ENCODE measurements at regions of chr5 and their contacts with region 1.

Region 1: DNA sequence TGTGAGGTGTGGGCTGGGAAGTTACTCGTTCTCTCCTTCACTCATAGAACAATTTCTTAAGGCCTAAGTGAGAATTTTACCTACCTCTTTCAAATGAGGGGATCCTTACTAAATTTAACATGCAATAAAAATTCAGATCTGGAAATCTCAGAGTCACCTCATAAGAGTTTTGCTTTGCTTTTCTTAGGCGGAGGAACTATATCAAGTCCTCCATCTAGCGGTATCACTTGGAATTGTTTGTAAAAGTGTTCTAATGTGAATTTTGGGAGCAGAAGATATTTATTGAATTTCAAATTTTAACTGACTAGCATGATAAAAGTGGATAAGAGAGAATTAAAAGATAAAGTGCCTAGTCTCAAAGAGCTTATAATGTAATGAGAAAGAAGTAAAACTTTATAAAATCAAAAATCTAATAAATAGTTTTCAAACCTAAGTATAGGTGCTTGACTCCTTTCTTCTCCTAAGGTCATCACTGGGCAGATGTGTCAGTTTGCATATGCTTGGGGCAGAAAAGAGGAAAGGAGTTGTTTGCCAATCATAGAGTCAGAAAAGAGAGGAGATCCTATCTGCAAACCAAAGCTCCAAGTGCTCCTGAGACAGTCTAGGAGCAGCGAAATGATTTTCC is 145.7 kb upstream of the DAB2 start:
- DNase-seq: peak; percentile 30 to 65 (median 59)
- H3K4me3 ChIP-seq: no peak overlapping the region
- H3K27ac ChIP-seq: no peak overlapping the region
- H3K4me1 ChIP-seq: no peaks in the 10 kb centered on the region
- H3K27me3 ChIP-seq: no peaks in the 10 kb centered on the region

Region 2: DNA sequence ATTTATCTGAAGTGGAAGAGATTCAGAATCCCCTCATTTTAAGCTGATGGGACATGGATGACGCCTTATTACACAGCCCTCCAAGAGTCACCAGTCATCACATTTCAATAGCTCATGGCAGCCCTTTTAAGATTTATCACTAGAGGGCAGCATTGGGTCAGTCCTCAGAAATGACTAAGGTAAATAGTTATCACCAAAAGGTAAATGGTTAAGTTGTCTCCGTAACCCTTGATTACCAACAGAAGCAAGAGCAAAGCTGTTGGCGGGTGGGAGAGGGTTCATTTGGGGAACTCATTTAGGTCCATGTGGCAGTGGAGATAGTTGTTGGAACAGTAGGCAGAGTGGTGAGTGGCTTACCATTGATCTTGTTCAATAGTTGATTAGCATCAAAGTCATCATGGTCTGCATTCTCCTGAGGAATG is 194.2 kb before region 1 on chr5:
- CTCF ChIA-PET with region 1: interaction called, 85 read pairs
- POLR2A ChIA-PET with region 1: no interaction called
- DNase-seq: peak; percentile 62 to 81 (median 73)
- H3K4me3 ChIP-seq: no peak overlapping the region
- H3K27ac ChIP-seq: no peak overlapping the region
- H3K4me1 ChIP-seq: no peaks in the 10 kb centered on the region
- H3K27me3 ChIP-seq: no peaks in the 10 kb centered on the region

Region 3: GRCh38 chr5:39580702-39581453 is 10.4 kb after region 1 on chr5:
- CTCF ChIA-PET with region 1: interaction called, 11 read pairs
- POLR2A ChIA-PET with region 1: no interaction called
- DNase-seq: peak in 2 of 3 donors; percentile 33
- H3K4me3 ChIP-seq: no peak overlapping the region
- H3K27ac ChIP-seq: no peak overlapping the region
- H3K4me1 ChIP-seq: peaks cover 0 to 7% (median 6%) of the 10 kb centered on the region in 4 experiments
- H3K27me3 ChIP-seq: no peaks in the 10 kb centered on the region

Region 4: GRCh38 chr5:39702928-39703327 is 132.4 kb after region 1 on chr5:
- CTCF ChIA-PET with region 1: no interaction called
- POLR2A ChIA-PET with region 1: no interaction called
- DNase-seq: no peak
- H3K4me3 ChIP-seq: no peak overlapping the region
- H3K27ac ChIP-seq: no peak overlapping the region
- H3K4me1 ChIP-seq: no peaks in the 10 kb centered on the region
- H3K27me3 ChIP-seq: peaks cover 0 to 2% (median 0%) of the 10 kb centered on the region in 5 experiments

Measured in common myeloid progenitor, CD34-positive (primary cell).